ENCODE measurements at regions of chr1 and their contacts with region 1.

Region 1: GRCh38 chr1:240027059-240027462 is 64.6 kb upstream of the FMN2 start:
- DNase-seq: no peak
- ATAC-seq: no peak
- H3K4me3 ChIP-seq: no peak overlapping the region
- H3K4me3 Mint-ChIP-seq: no peak overlapping the region
- H3K27ac ChIP-seq: no peak overlapping the region
- H3K27ac Mint-ChIP-seq: no peak overlapping the region
- H3K4me1 ChIP-seq: no peaks in the 10 kb centered on the region
- H3K4me1 Mint-ChIP-seq: no peaks in the 10 kb centered on the region
- H3K27me3 ChIP-seq: no peaks in the 10 kb centered on the region
- H3K27me3 Mint-ChIP-seq: peaks cover 0 to 21% (median 12%) of the 10 kb centered on the region in 5 donors

Region 2: GRCh38 chr1:240149484-240150094 is 122.5 kb after region 1 on chr1:
- CTCF ChIA-PET with region 1: no interaction called
- POLR2A ChIA-PET with region 1: no interaction called
- intact Hi-C with region 1: loop called in 1 of 2 experiments (anchors 1 kb)
- DNase-seq: peak in 1 of 9 donors; percentile 0
- ATAC-seq: no peak
- H3K4me3 ChIP-seq: no peak overlapping the region
- H3K4me3 Mint-ChIP-seq: no peak overlapping the region
- H3K27ac ChIP-seq: no peak overlapping the region
- H3K27ac Mint-ChIP-seq: no peak overlapping the region
- H3K4me1 ChIP-seq: no peaks in the 10 kb centered on the region
- H3K4me1 Mint-ChIP-seq: no peaks in the 10 kb centered on the region
- H3K27me3 ChIP-seq: no peaks in the 10 kb centered on the region
- H3K27me3 Mint-ChIP-seq: peaks cover 0 to 16% (median 0%) of the 10 kb centered on the region in 5 donors

Region 3: DNA sequence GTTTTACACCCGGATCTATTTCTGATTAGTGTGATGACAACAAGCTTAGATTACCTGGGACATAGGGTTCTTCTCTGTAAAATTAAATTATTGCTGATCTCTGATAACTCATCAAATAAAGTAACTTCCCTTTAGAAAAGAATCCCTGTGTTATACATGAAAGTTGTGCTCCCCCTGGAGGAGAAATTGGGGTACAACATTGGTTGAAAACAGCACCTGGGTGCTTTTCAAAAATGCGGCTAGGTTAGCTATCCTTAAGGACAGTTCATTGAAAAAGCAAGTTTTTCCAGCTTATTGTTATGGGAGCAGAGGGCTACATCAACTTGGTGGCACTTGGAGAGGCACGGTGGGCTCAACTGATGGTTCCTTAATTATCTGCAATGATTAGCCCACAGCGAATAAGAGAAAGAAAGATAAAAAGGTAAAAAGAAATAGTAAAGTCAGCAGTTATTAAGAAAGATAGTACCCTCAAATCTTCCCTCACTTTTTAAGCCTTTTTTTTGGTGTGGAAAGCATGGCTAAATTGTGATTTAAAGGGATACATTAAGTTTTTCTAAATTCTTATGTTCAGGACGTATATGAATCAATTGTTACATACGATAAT is 162.4 kb after region 1 on chr1:
- CTCF ChIA-PET with region 1: no interaction called
- POLR2A ChIA-PET with region 1: no interaction called
- intact Hi-C with region 1: loop called in 1 of 2 experiments (anchors 2 kb)
- DNase-seq: peak in 2 of 9 donors; percentile 8 to 11
- ATAC-seq: peak; percentile 36
- H3K4me3 ChIP-seq: no peak overlapping the region
- H3K4me3 Mint-ChIP-seq: peak overlapping the region in 7 of 10 donors; percentile 2 to 66 (median 32)
- H3K27ac ChIP-seq: no peak overlapping the region
- H3K27ac Mint-ChIP-seq: no peak overlapping the region
- H3K4me1 ChIP-seq: no peaks in the 10 kb centered on the region
- H3K4me1 Mint-ChIP-seq: peaks cover 0 to 6% (median 3%) of the 10 kb centered on the region in 7 donors
- H3K27me3 ChIP-seq: no peaks in the 10 kb centered on the region
- H3K27me3 Mint-ChIP-seq: peaks cover 2 to 29% (median 15%) of the 10 kb centered on the region in 5 donors

Region 4: GRCh38 chr1:240691521-240692338 is 664.7 kb after region 1 on chr1:
- CTCF ChIA-PET with region 1: no interaction called
- POLR2A ChIA-PET with region 1: no interaction called
- intact Hi-C with region 1: loop called in 1 of 2 experiments (anchors 5 kb)
- DNase-seq: no peak
- ATAC-seq: peak; percentile 40
- H3K4me3 ChIP-seq: no peak overlapping the region
- H3K4me3 Mint-ChIP-seq: no peak overlapping the region
- H3K27ac ChIP-seq: no peak overlapping the region
- H3K27ac Mint-ChIP-seq: no peak overlapping the region
- H3K4me1 ChIP-seq: no peaks in the 10 kb centered on the region
- H3K4me1 Mint-ChIP-seq: peaks cover 4 to 13% (median 9%) of the 10 kb centered on the region in 7 donors
- H3K27me3 ChIP-seq: no peaks in the 10 kb centered on the region
- H3K27me3 Mint-ChIP-seq: peaks cover 0 to 4% (median 4%) of the 10 kb centered on the region in 5 donors